ENCODE measurements at regions of chr9 and their contacts with region 1.

Region 1: DNA sequence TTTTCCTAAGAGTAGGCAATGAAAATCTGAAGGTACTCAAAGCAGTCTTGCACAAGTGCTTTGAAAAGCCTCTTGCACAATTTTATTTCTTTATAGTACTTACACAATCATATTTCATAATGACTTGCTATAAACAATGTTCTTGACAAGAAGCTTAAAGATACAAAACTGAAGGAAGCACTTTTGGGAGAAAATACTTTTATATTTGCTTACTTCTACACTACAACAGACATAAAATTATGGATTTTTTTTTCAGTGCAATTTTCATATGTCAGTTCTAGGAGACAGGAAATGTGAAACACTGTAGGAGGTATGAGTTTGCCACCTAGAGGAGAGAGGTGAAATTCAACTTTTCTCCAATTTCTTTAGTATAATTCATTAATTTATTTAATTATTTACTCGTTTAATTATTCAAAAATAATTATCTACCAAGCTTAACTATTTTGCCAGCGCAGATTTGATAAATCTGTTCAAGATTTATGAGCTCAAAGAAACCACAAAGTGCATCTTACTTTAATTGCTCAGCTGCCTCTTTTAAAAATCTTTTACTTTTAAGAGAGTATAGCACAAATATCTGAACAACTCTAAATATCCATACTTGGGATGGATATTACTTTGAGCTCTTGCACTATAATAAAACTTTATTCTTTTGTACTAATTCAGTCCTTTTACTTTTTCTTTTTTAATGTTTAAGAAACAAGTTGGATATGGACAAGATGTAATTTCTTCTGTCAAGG is 29.0 kb upstream of the CDKN2B start:
- DNase-seq: no peak
- ATAC-seq: no peak
- H3K4me3 Mint-ChIP-seq: no peak overlapping the region
- H3K27ac Mint-ChIP-seq: no peak overlapping the region
- H3K4me1 Mint-ChIP-seq: peaks cover 29% of the 10 kb centered on the region
- H3K27me3 Mint-ChIP-seq: peaks cover 22% of the 10 kb centered on the region

Region 2: GRCh38 chr9:22079873-22080341 is 41.8 kb after region 1 on chr9:
- CTCF ChIA-PET with region 1: interaction called, 14 read pairs
- DNase-seq: peak; percentile 70
- ATAC-seq: peak; percentile 88
- H3K4me3 Mint-ChIP-seq: peak overlapping the region; percentile 6
- H3K27ac Mint-ChIP-seq: peak overlapping the region; percentile 67
- H3K4me1 Mint-ChIP-seq: peaks cover 48% of the 10 kb centered on the region
- H3K27me3 Mint-ChIP-seq: peaks cover 36% of the 10 kb centered on the region

Region 3: DNA sequence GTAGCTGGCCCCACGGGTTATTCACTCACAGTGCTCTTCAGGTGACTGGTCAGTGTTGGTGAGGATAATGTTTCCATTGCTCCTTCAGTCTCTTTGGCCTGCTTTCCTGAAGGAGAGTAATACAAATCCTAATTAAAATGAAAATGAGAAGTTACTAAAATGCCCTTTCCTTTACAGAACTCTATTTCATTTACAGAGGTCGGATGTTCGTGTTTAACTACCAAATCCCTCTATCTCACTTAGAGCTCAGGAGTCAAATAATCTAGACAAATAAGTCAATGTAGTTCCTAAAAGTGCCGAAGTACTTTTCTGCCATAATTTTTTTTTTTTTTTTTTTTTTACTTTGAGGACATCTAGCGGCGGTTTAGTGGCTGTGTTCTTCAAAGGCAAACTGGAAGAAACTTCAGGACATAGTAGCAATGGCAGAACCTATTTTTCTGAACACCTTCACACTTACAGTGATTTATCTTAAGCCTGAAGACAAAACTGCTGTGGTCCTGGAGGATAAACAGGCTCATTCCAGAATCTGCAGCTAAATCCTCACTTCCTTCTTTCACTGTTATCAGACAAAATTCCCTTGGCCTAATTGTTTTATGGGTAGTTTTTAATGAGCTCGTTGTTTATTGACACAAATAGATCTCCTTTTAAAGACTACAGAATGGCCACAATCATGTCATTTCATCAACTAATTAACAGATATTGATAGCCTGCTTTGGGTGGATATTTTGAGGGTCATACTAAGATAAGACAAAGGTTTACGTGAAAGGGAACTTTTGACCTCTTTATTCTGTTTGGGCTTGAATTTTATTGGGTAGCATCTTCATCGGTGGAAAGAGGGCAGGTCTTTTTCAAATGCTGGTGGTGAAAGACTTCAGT is 200.9 kb after region 1 on chr9:
- CTCF ChIA-PET with region 1: interaction called, 13 read pairs
- DNase-seq: no peak
- ATAC-seq: peak; percentile 41
- H3K4me3 Mint-ChIP-seq: no peak overlapping the region
- H3K27ac Mint-ChIP-seq: no peak overlapping the region
- H3K4me1 Mint-ChIP-seq: peaks cover 32% of the 10 kb centered on the region
- H3K27me3 Mint-ChIP-seq: peaks cover 50% of the 10 kb centered on the region